Heart right ventricle (tissue), 16 donors: ENCODE measurements at regions of chr5 and their contacts with region 1.

Region 1: DNA sequence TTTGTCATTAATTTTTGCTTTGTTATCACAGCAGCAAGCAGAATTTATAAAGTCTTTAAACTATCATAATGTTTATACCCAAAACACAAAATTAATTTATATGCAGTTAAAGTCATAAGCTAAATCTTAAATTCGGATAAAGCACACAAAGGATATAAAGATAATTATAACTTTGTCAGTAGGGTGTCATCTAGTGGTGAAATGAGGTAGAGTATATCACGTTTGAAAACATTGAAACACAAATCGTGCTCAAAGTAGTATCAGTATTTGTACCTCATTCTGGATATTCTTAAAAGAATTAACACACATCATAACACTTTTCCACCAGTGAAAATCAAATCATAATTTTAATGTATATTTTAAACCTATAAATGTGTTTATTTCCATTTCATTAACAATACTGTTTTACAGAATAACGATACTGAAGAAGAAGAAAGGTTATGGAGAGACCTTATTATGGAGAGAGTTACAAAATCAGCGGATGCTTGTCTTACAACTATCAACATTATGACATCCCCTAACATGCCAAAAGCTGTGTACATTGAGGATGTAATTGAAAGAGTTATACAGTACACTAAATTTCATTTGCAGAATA is 129.5 kb downstream of the NIPBL start:
- DNase-seq: no peak
- ATAC-seq: no peak
- H3K4me3 ChIP-seq: no peak overlapping the region
- H3K27ac ChIP-seq: no peak overlapping the region
- H3K4me1 ChIP-seq: no peaks in the 10 kb centered on the region
- H3K27me3 ChIP-seq: no peaks in the 10 kb centered on the region
- CTCF ChIP-seq: peak in 8 of 9 donors; percentile 36 to 78 (median 67)

Region 2: GRCh38 chr5:36728697-36729543 is 277.1 kb before region 1 on chr5:
- intact Hi-C with region 1: loop called in 7 of 10 experiments (anchors 5 to 10 kb)
- DNase-seq: peak in 1 of 2 donors; percentile 20
- ATAC-seq: peak in 5 of 8 donors; percentile 50 to 74 (median 67)
- H3K4me3 ChIP-seq: no peak overlapping the region
- H3K27ac ChIP-seq: no peak overlapping the region
- H3K4me1 ChIP-seq: peaks cover 0 to 7% (median 0%) of the 10 kb centered on the region in 9 donors
- H3K27me3 ChIP-seq: peaks cover 0 to 4% (median 0%) of the 10 kb centered on the region in 7 donors
- CTCF ChIP-seq: peak; percentile 55 to 87 (median 74)

Region 3: DNA sequence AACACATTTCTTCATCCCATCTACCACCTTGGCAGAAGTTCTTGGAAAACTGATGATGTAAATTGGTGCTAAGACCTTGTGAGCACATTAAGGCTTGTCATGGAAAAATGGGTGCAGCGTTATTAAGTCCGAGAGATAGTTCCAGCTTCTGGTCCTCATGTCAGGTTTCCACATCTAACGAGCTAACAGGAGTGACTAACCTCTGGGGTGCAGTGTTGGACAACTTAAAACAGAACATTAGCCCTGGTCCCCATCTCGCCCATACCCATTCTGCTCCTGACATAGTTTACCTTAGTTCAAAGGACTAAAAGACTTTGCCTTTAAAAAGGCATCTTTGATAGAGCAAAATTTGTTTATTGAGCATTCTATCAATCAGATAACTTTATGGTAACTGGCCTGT is 271.6 kb before region 1 on chr5:
- intact Hi-C with region 1: loop called in 7 of 10 experiments (anchors 5 to 10 kb)
- DNase-seq: no peak
- ATAC-seq: peak in 1 of 8 donors; percentile 76
- H3K4me3 ChIP-seq: no peak overlapping the region
- H3K27ac ChIP-seq: no peak overlapping the region
- H3K4me1 ChIP-seq: peaks cover 0 to under 1% (median 0%) of the 10 kb centered on the region in 9 donors
- H3K27me3 ChIP-seq: peaks cover 0 to 24% (median 0%) of the 10 kb centered on the region in 7 donors
- CTCF ChIP-seq: peak in 5 of 9 donors; percentile 10 to 43 (median 24)

Region 4: GRCh38 chr5:36739751-36740221 is 266.3 kb before region 1 on chr5:
- intact Hi-C with region 1: loop called in 8 of 10 experiments (anchors 5 to 10 kb)
- DNase-seq: peak; percentile 48 to 50
- ATAC-seq: peak in 6 of 8 donors; percentile 48 to 60 (median 53)
- H3K4me3 ChIP-seq: no peak overlapping the region
- H3K27ac ChIP-seq: no peak overlapping the region
- H3K4me1 ChIP-seq: peaks cover 0 to 18% (median 7%) of the 10 kb centered on the region in 9 donors
- H3K27me3 ChIP-seq: peaks cover 0 to 24% (median 12%) of the 10 kb centered on the region in 7 donors
- CTCF ChIP-seq: peak; percentile 37 to 87 (median 69)

Region 5: DNA sequence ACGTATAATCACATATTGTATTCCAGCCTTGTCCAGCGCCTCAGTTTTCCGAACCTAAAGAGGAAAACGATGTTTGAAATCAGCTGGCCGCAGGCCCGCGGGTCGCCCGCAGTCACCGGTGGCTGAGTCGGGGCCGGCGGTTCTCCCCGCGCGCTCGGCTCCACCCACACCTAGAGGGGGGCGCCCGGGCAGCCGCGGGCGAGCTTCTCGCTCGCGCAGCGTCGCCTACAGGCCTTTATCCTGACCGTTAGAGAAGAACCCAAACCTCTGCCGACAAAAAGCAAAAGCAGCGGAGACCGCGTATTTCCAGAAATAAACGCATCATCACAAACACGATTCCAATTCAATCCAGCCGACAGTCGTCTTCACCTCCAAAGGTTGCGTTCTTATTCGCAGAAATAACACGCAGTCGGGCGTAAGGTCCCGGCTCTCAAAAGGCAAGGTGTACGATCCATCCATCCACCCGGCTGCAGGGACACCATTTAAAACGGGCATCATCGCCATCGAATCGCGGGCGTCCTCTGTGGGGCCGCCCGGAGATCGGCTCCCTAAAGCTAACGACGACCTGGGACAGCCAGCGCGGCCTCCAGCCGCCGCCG is 130.2 kb before region 1 on chr5:
- intact Hi-C with region 1: loop called in 1 of 10 experiments (anchors 5 kb)
- DNase-seq: peak; percentile 80 to 83
- ATAC-seq: peak; percentile 83 to 92 (median 90)
- H3K4me3 ChIP-seq: peak overlapping the region; percentile 66 to 97 (median 88)
- H3K27ac ChIP-seq: peak overlapping the region; percentile 91 to 99 (median 98)
- H3K4me1 ChIP-seq: peaks cover 0 to 59% (median 49%) of the 10 kb centered on the region in 9 donors
- H3K27me3 ChIP-seq: no peaks in the 10 kb centered on the region
- CTCF ChIP-seq: peak; percentile 21 to 81 (median 54)

Region 6: GRCh38 chr5:37090123-37090726 is 84.2 kb after region 1 on chr5:
- intact Hi-C with region 1: no loop called
- DNase-seq: no peak
- ATAC-seq: no peak
- H3K4me3 ChIP-seq: no peak overlapping the region
- H3K27ac ChIP-seq: no peak overlapping the region
- H3K4me1 ChIP-seq: no peaks in the 10 kb centered on the region
- H3K27me3 ChIP-seq: no peaks in the 10 kb centered on the region
- CTCF ChIP-seq: no peak